Transverse colon (tissue), 4 donors: ENCODE measurements at regions of chr4 and their contacts with region 1.

Region 1: GRCh38 chr4:2441393-2442174 is 22.8 kb downstream of the CFAP99 start:
- DNase-seq: peak; percentile 78
- H3K4me3 ChIP-seq: no peak overlapping the region
- H3K27ac ChIP-seq: no peak overlapping the region
- H3K4me1 ChIP-seq: no peaks in the 10 kb centered on the region
- H3K27me3 ChIP-seq: no peaks in the 10 kb centered on the region
- CTCF ChIP-seq: peak; percentile 61 to 82 (median 69)
- EP300 ChIP-seq: no peak
- POLR2A ChIP-seq: no peak

Region 2: GRCh38 chr4:2154215-2154740 is 287.3 kb before region 1 on chr4:
- in situ Hi-C with region 1: no loop called
- intact Hi-C with region 1: no loop called
- DNase-seq: no peak
- H3K4me3 ChIP-seq: no peak overlapping the region
- H3K27ac ChIP-seq: no peak overlapping the region
- H3K4me1 ChIP-seq: no peaks in the 10 kb centered on the region
- H3K27me3 ChIP-seq: no peaks in the 10 kb centered on the region
- CTCF ChIP-seq: no peak
- EP300 ChIP-seq: no peak
- POLR2A ChIP-seq: no peak

Region 3: DNA sequence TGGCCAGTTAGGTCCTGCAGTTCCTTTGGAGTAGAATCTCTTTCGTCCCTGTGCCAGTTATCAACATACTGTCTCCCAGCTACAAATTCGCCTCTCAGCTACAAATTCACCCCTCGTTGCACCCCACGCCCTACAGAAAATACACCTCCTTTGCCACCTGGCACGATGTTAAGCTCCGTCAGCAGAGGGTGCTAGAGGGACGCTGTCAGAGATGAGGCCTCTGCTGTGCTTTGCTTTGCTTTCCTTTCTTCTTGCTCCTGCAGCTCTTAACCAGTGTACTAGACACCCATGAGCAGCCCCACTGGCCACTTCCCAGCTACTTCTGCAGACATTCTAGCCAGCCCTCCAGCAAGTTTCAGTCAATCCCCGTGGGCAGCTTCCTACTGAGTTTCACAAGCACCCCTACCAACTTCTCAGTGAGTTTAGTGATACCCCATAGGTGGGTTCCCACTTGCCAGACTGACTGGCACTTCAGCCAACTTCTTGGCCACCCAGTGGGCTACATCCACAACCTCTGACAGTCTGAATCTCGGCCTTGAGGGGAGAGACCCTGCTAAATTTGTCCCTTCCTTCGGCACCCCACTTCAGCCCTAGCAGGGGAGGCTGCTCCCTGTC is 221.5 kb before region 1 on chr4:
- in situ Hi-C with region 1: loop called in 2 of 4 experiments (anchors 10 to 25 kb)
- intact Hi-C with region 1: loop called (anchors 10 kb)
- DNase-seq: peak; percentile 75
- H3K4me3 ChIP-seq: no peak overlapping the region
- H3K27ac ChIP-seq: no peak overlapping the region
- H3K4me1 ChIP-seq: no peaks in the 10 kb centered on the region
- H3K27me3 ChIP-seq: no peaks in the 10 kb centered on the region
- CTCF ChIP-seq: peak; percentile 79 to 82 (median 79)
- EP300 ChIP-seq: no peak
- POLR2A ChIP-seq: no peak